Activated T-helper 1 cell treated with anti-CD3 and anti-CD28 coated beads, Interleukin-12 subunit alpha, Interleukin-12 subunit beta, Interleukin-2, Interleukin-4 antibody, amounts not matched to agents 30 ng/mL and 10 ng/mL and 1 ng/mL, durations not matched to agents 14 hours and 24 hours and 36 hours (primary cell): ENCODE measurements at regions of chr20 and their contacts with region 1.

Region 1: GRCh38 chr20:63381807-63382322 is 20.7 kb upstream of the CHRNA4 start:
- DNase-seq: no peak
- H3K4me3 Mint-ChIP-seq: no peak overlapping the region
- H3K27ac Mint-ChIP-seq: no peak overlapping the region
- H3K4me1 Mint-ChIP-seq: no peaks in the 10 kb centered on the region
- H3K27me3 Mint-ChIP-seq: peaks cover 6% of the 10 kb centered on the region

Region 2: DNA sequence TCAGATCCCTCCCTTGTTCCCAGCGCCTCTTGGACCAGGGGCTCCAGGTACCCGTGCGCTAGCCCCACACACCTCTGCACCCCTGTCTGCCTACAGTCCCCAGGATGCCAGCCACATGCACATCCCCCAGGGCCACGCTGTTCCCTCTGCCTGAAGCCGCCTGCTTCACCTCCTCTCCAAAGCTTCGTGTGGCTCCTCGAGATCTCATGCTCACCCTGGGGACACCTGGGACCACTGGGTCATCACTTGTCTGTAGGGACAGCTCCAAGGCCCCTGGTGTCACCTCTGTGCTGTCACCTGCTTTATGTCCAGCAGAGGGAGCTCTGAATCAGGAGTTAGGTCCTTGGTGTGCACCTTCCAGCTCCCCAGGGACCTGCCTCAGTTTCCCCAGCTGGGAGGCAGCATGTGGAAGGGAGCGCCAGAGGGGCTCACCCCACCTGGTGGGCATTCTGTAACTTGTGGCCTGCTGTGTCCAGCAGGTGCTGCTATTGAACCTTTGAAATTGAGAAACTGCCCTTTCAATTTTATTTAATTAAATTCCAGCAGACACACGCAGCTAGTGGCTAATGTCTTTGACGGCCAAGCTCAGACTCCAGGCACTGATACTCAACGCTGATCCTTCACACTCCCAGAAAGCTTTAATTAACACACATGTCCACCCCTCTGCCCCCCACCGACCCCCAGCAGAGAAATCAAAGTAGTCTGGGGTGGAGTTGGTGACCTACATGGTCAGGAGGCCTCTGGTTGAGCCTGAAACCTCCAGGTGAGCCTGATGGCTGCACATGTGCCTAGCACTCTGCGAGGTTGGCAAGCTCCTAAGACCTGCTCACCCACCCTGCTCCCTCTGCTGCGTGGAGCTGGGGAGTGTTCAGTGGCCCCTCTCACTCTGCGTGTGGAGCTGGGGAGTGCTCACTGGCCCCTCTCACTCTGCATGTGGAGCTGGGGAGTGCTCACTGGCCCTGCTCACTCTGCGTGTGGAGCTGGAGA is 158.4 kb before region 1 on chr20:
- intact Hi-C with region 1: loop called (anchors 1 kb)
- DNase-seq: peak; percentile 19
- H3K4me3 Mint-ChIP-seq: no peak overlapping the region
- H3K27ac Mint-ChIP-seq: no peak overlapping the region
- H3K4me1 Mint-ChIP-seq: no peaks in the 10 kb centered on the region
- H3K27me3 Mint-ChIP-seq: peaks cover 8% of the 10 kb centered on the region

Region 3: GRCh38 chr20:63309261-63310071 is 72.4 kb before region 1 on chr20:
- intact Hi-C with region 1: loop called (anchors 1 kb)
- DNase-seq: no peak
- H3K4me3 Mint-ChIP-seq: no peak overlapping the region
- H3K27ac Mint-ChIP-seq: no peak overlapping the region
- H3K4me1 Mint-ChIP-seq: no peaks in the 10 kb centered on the region
- H3K27me3 Mint-ChIP-seq: no peaks in the 10 kb centered on the region

Region 4: DNA sequence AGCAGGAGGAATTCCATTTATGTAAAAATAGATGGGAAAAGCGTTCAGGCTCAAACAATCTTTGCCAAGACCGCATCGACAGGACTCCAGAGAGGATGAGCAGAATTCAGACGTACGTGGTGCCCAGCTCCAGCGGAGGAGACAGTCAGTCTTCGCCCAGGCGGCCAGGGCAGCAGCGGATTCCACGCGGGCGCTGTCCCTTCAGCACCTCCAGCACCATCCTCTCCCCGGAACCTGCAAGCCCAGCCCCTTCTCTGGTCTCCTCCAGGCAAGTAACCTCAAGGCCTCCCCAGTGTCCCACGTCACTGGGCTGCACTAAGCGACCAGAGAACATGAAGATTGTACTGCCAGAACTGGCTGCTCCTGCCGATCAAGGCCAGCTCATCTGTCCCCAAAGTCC is 93.3 kb after region 1 on chr20:
- intact Hi-C with region 1: no loop called
- DNase-seq: no peak
- H3K4me3 Mint-ChIP-seq: no peak overlapping the region
- H3K27ac Mint-ChIP-seq: no peak overlapping the region
- H3K4me1 Mint-ChIP-seq: no peaks in the 10 kb centered on the region
- H3K27me3 Mint-ChIP-seq: peaks cover 32% of the 10 kb centered on the region